ENCODE measurements at regions of chr12 and their contacts with region 1.

Region 1: GRCh38 chr12:62799126-62799736 is 135.7 kb downstream of the PPM1H start:
- DNase-seq: peak in 5 of 10 donors; percentile 12 to 58 (median 49)

Region 2: GRCh38 chr12:62581288-62582064 is 217.8 kb before region 1 on chr12:
- intact Hi-C with region 1: loop called (anchors 1 kb)
- DNase-seq: peak in 1 of 10 donors; percentile 48

Region 3: GRCh38 chr12:63068857-63069442 is 269.7 kb after region 1 on chr12:
- intact Hi-C with region 1: loop called (anchors 2 kb)
- DNase-seq: no peak